Prostate gland (tissue), 2 donors: ENCODE measurements at regions of chr6 and their contacts with region 1.

Region 1: DNA sequence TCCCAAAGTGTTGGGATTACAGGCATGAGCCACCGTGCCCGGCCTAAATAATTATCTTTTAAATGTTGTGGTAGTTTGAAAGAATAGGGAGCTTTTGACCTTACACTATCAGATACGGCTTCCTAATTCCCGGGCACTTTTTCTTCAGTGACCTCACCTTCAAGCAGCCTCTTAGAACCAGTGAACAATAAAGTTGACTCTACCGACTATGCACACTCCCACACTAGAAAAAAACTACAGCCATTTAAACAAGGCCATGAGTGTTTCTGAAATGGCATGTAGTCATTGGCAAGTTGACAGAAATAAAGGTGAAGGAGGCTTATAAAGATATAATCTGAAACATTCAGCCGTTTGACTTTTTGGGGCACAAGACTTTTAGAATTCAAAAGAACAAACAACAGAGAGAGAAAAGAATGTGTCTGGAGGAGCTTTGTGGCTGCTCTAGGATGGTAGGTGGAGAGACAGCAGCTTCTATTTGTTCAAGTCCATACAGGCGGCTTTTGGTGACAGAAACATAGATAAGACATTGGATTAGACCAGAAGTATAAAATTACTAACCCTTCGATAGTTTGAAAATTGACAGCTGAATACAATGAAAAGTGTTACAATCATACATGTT is 75.2 kb downstream of the GJA1 start:
- DNase-seq: peak; percentile 19
- H3K4me3 ChIP-seq: no peak overlapping the region
- H3K27ac ChIP-seq: peak overlapping the region in 1 of 2 donors; percentile 16
- H3K4me1 ChIP-seq: no peaks in the 10 kb centered on the region
- H3K27me3 ChIP-seq: no peaks in the 10 kb centered on the region
- CTCF ChIP-seq: no peak
- POLR2A ChIP-seq: no peak

Region 2: GRCh38 chr6:120447605-120448004 is 1063.1 kb before region 1 on chr6:
- intact Hi-C with region 1: no loop called
- DNase-seq: no peak
- H3K4me3 ChIP-seq: no peak overlapping the region
- H3K27ac ChIP-seq: no peak overlapping the region
- H3K4me1 ChIP-seq: no peaks in the 10 kb centered on the region
- H3K27me3 ChIP-seq: no peaks in the 10 kb centered on the region
- CTCF ChIP-seq: no peak
- POLR2A ChIP-seq: no peak

Region 3: DNA sequence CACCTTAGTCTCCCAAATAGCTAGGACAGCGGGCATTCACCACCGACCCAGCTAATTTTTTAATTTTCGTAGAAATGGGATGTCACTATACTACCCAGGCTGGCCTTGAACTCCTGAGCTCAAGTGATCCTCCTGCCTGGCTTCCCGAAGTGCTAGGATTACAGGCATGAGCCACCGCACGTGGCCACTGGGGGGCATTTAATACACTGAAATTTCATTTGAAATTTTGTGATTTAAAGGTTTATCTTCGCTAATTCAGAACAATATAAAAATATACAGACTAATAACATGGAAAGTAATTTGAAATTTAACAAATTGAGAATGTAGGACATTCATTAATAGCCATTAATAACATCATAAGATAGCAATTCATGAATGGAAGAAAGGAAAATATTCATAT is 155.9 kb before region 1 on chr6:
- intact Hi-C with region 1: no loop called
- DNase-seq: no peak
- H3K4me3 ChIP-seq: no peak overlapping the region
- H3K27ac ChIP-seq: no peak overlapping the region
- H3K4me1 ChIP-seq: no peaks in the 10 kb centered on the region
- H3K27me3 ChIP-seq: no peaks in the 10 kb centered on the region
- CTCF ChIP-seq: no peak
- POLR2A ChIP-seq: no peak

Region 4: DNA sequence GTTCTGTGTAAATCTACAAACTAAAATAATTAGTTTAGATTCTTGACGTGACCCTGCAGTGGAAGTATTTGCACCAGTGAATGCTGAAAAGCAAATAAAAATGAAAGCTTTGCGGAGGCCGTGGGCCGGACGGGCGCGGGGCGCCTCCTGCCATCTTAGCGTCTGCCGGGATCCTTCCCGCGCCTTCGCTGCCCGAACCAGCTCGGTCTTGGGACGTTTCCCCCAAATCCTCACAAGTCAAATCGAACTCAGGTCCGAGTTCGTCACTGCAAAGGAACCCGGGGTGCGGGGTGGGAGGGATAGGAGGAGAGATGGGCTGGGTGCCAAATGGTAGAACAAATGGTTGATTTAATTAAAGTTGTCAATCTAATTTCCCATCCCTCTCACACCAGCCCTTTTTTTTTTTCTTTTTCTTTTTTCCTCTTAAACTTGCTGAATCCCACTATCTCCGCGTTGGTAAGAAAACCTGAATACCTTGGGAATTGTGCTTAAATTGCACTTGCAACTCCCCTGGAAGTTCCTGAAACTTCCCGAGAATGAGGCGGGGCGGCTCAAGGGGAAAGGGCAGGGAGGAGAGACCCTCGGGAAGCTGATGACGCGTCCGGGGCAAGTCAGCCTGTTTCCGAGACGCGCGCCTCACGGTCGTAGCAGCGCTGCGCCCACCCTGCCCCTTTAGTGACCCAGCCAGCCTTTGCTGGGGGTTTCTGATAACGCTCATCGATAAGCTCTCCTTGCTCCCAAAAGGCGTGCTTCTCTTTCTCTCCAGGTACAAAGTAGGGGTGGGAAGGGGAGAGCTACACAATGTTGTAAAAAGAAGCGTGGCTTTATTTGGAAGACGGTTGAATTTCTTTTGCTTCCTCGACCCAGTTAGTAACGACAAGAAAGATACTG is 73.5 kb before region 1 on chr6:
- intact Hi-C with region 1: no loop called
- DNase-seq: peak; percentile 40
- H3K4me3 ChIP-seq: peak overlapping the region; percentile 42 to 47
- H3K27ac ChIP-seq: peak overlapping the region; percentile 79 to 80
- H3K4me1 ChIP-seq: no peaks in the 10 kb centered on the region
- H3K27me3 ChIP-seq: no peaks in the 10 kb centered on the region
- CTCF ChIP-seq: no peak
- POLR2A ChIP-seq: peak; percentile 4

Region 5: GRCh38 chr6:121573481-121573880 is 62.8 kb after region 1 on chr6:
- intact Hi-C with region 1: no loop called
- DNase-seq: no peak
- H3K4me3 ChIP-seq: no peak overlapping the region
- H3K27ac ChIP-seq: no peak overlapping the region
- H3K4me1 ChIP-seq: no peaks in the 10 kb centered on the region
- H3K27me3 ChIP-seq: no peaks in the 10 kb centered on the region
- CTCF ChIP-seq: no peak
- POLR2A ChIP-seq: no peak

Region 6: DNA sequence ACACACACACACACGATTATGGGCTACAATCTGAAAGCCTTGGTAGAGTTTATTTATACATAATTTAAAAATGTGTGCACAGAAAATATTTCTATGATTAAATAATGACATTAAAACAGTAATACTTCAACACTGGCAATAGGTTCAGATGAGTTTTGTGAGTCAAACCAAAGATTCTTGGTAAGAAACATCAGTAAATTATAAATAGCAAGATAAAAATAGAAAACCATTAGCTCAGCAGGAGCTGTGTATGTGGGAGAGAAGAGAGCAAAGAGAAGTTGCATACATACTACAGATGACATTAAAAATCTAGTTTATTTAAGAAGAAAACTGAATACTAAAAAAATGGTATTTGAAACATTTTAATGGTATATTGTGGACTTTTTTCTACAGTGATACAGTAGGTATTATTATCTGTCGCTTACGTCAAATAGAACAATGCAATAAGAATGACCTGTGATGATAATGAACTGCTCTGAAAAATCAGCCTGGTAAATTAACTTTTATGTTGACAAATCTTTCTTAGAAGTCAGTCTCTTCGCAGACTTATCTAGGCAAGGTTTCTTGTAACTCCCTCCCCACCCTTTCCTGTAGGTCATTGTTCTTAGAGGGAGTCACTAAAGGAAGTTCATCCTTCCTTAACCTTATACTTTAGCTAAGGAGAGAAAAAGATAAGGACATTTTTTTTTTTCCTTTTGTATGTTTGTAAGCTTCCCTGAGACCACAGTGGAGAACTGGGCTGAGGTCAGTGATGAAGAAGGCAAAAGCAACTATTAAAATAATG is 74.1 kb after region 1 on chr6:
- intact Hi-C with region 1: loop called (anchors 10 kb)
- DNase-seq: no peak
- H3K4me3 ChIP-seq: no peak overlapping the region
- H3K27ac ChIP-seq: no peak overlapping the region
- H3K4me1 ChIP-seq: no peaks in the 10 kb centered on the region
- H3K27me3 ChIP-seq: no peaks in the 10 kb centered on the region
- CTCF ChIP-seq: no peak
- POLR2A ChIP-seq: no peak